Transverse colon (tissue), 4 donors: ENCODE measurements at regions of chr16 and their contacts with region 1.

Region 1: GRCh38 chr16:11484691-11485258 is 101.9 kb downstream of the LITAF start:
- DNase-seq: no peak
- H3K4me3 ChIP-seq: no peak overlapping the region
- H3K27ac ChIP-seq: no peak overlapping the region
- H3K4me1 ChIP-seq: peaks cover 0 to 8% (median 3%) of the 10 kb centered on the region in 4 donors
- H3K27me3 ChIP-seq: no peaks in the 10 kb centered on the region
- CTCF ChIP-seq: no peak
- EP300 ChIP-seq: no peak
- POLR2A ChIP-seq: no peak

Region 2: DNA sequence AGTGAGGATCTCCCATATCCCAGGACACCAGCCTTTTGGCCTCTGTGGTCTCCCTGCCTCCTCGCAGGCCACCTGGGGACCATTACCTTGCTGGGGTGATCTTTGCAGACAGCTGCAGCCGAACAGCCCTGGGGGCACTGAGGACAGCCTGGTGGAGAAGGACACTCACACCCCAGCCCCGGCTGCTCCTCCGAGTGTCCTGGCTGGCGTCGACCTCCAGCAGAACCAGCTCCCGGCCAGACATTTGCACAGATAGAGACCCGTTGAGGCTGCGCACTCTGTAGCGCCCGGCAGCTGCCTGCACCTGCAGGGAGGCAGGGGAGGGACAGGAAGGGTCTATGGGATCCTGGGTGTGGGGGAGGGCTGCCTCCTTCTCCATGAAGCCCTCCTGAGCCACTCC is 49.2 kb before region 1 on chr16:
- in situ Hi-C with region 1: no loop called
- intact Hi-C with region 1: loop called (anchors 1 kb)
- DNase-seq: no peak
- H3K4me3 ChIP-seq: no peak overlapping the region
- H3K27ac ChIP-seq: no peak overlapping the region
- H3K4me1 ChIP-seq: no peaks in the 10 kb centered on the region
- H3K27me3 ChIP-seq: no peaks in the 10 kb centered on the region
- CTCF ChIP-seq: no peak
- EP300 ChIP-seq: no peak
- POLR2A ChIP-seq: no peak

Region 3: GRCh38 chr16:12043953-12044352 is 559.2 kb after region 1 on chr16:
- in situ Hi-C with region 1: no loop called
- intact Hi-C with region 1: loop called (anchors 5 kb)
- DNase-seq: no peak
- H3K4me3 ChIP-seq: no peak overlapping the region
- H3K27ac ChIP-seq: no peak overlapping the region
- H3K4me1 ChIP-seq: no peaks in the 10 kb centered on the region
- H3K27me3 ChIP-seq: no peaks in the 10 kb centered on the region
- CTCF ChIP-seq: no peak
- EP300 ChIP-seq: no peak
- POLR2A ChIP-seq: no peak